K562 (cell line): ENCODE measurements at regions of chr4 and their contacts with region 1.

Region 1: DNA sequence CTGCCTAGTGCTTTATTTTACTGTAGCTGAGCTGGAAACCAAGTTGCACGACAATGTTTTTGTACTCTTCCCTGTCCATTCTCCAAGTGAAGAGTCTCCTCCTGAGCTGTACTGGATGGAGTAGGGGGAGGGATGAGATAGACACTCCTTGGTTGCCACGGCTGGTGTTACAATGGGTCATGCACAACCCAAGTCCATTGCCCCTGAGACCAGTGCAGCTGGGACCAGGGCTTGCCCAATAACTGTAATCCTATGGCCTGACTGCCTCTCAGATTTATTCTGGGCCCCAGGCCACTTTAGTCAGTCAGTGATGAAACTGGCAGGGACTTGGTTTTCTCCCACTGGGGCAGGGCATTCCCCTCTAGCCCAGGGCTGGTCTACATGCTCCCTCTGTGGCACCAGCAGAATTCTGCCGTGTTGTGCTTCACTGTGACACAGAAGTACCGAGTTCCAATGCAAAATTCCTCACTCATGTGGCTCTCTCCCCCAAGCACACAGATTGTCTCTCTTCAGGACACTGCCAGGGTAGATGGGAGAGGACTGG is 203.3 kb upstream of the PCDH18 start:
- DNase-seq: no peak
- ATAC-seq: peak; percentile 27; the same call in 1 of the 3 replicates
- H3K4me3 ChIP-seq: no peak overlapping the region
- H3K27ac ChIP-seq: no peak overlapping the region
- H3K4me1 ChIP-seq: peaks cover 0 to 6% of the 10 kb centered on the region in 2 experiments; a peak in 1 of 5 replicates
- H3K27me3 ChIP-seq: no peaks in the 10 kb centered on the region
- CTCF ChIP-seq: no peak
- EP300 ChIP-seq: no peak
- POLR2A ChIP-seq: no peak
- RAD21 ChIP-seq: no peak

Region 2: DNA sequence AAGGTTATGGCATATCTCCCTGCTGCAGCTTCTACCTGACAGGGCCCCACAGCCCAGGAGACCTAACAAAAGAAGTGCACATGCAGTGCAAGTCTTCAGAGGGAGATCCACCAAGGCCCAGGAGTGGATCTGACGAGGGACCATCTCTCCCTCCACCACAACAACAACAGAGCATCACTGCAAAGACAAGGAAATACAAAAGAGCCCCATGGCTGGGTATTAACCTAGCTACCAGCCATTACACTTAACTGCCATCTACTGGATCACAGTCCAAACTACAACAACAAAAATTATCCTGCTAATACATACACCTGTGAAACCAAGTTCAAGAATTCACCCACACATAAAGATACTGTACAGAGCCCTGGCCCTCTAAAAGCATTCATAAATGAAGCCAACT is 786.7 kb after region 1 on chr4:
- CTCF ChIA-PET with region 1: no interaction called
- POLR2A ChIA-PET with region 1: no interaction called
- in situ Hi-C with region 1: no loop called
- intact Hi-C with region 1: loop called (anchors 5 kb)
- DNase-seq: peak in 2 of 4 experiments; percentile 24 to 29
- ATAC-seq: peak; percentile 90
- H3K4me3 ChIP-seq: no peak overlapping the region
- H3K27ac ChIP-seq: no peak overlapping the region
- H3K4me1 ChIP-seq: no peaks in the 10 kb centered on the region
- H3K27me3 ChIP-seq: no peaks in the 10 kb centered on the region
- CTCF ChIP-seq: peak; percentile 35 to 65 (median 59); a peak in 4 of 6 replicates
- EP300 ChIP-seq: no peak
- POLR2A ChIP-seq: no peak
- RAD21 ChIP-seq: peak; percentile 48 to 70